SK-N-SH (cell line): ENCODE measurements at regions of chr18 and their contacts with region 1.

Region 1: DNA sequence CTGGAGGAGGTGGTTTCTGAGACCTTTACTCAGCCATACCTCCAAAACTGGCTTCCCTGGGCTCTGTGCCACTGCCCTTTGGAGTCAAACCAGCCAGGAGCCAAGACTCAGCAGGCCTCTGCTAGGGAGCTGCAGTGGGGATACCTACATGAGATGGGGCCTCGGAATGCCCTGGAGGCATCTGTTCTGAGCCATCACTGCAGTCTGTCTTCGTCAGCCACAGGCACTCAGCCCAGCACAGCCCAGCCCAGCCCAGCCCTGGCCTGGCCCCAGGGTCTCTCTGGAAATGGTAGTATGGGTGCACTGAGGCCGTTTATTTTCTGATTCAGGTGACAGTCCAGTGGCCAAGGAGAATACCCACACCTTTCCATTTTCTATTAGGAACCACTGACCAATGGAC is 209.8 kb downstream of the CELF4 start:
- DNase-seq: no peak
- H3K4me3 ChIP-seq: no peak overlapping the region
- H3K27ac ChIP-seq: no peak overlapping the region
- H3K4me1 ChIP-seq: peaks cover 0 to 2% of the 10 kb centered on the region in 2 experiments; a peak in 1 of 4 replicates
- H3K27me3 ChIP-seq: no peaks in the 10 kb centered on the region
- CTCF ChIP-seq: no peak
- EP300 ChIP-seq: no peak
- RAD21 ChIP-seq: no peak

Region 2: GRCh38 chr18:37270038-37270665 is 85.6 kb before region 1 on chr18:
- CTCF ChIA-PET with region 1: no interaction called
- POLR2A ChIA-PET with region 1: no interaction called
- DNase-seq: no peak
- H3K4me3 ChIP-seq: no peak overlapping the region
- H3K27ac ChIP-seq: no peak overlapping the region
- H3K4me1 ChIP-seq: peaks cover 0 to 7% of the 10 kb centered on the region in 2 experiments; a peak in 1 of 4 replicates
- H3K27me3 ChIP-seq: no peaks in the 10 kb centered on the region
- CTCF ChIP-seq: no peak
- EP300 ChIP-seq: no peak
- RAD21 ChIP-seq: no peak

Region 3: DNA sequence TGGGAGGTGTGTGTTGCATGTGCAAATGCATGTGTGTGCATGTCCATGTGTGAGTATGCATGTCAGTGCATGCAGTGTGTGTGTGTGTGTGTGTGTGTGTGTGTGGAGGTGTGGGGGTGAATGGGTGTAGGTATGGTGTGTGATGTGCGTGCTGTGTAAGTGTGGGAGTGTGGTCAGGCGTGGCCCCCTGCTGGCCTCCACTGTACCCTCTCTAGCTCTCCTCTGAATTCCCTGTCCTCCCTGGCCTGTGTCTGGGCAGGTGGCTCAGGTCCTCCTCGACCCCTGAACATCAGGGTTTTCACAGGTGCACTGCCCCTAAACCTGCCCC is 20.4 kb before region 1 on chr18:
- CTCF ChIA-PET with region 1: interaction called, 10 read pairs
- POLR2A ChIA-PET with region 1: interaction called, 3 read pairs
- DNase-seq: peak; percentile 87
- H3K4me3 ChIP-seq: no peak overlapping the region; a peak in 1 of 4 replicates
- H3K27ac ChIP-seq: peak overlapping the region in 1 of 2 experiments; percentile 91; a peak in 2 of 4 replicates
- H3K4me1 ChIP-seq: peaks cover 7 to 54% of the 10 kb centered on the region in 2 experiments; a peak in 2 of 4 replicates
- H3K27me3 ChIP-seq: no peaks in the 10 kb centered on the region
- CTCF ChIP-seq: peak; percentile 54
- EP300 ChIP-seq: no peak
- RAD21 ChIP-seq: peak; percentile 78